Activated CD4-positive, alpha-beta memory T cell treated with anti-CD3 and anti-CD28 coated beads for 36 hours (primary cell): ENCODE measurements at regions of chr7 and their contacts with region 1.

Region 1: DNA sequence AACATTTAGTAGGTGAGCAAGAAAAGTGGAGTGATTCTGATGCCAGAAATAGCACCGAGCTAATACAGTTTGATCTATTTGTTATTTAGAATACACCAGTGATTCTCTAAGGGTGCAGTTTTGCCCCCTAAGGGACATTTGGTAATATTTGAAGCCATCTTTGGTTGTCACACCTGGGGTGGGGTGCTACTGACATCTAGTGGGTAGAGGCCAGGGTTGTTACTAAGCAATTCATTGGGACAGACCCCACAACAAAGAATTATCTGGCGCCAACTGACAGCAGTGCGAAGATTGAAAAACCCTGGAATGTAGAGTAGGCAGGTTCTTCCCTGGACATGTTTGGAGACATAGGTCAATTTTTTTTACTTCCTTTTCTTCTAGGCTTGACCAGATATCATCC is 14.6 kb downstream of the PALS2 start:
- DNase-seq: peak; percentile 48
- H3K4me3 Mint-ChIP-seq: no peak overlapping the region
- H3K27ac Mint-ChIP-seq: no peak overlapping the region
- H3K4me1 Mint-ChIP-seq: peaks cover 11% of the 10 kb centered on the region
- H3K27me3 Mint-ChIP-seq: no peaks in the 10 kb centered on the region

Region 2: GRCh38 chr7:24401628-24402593 is 185.9 kb before region 1 on chr7:
- CTCF ChIA-PET with region 1: no interaction called
- POLR2A ChIA-PET with region 1: no interaction called
- intact Hi-C with region 1: loop called (anchors 5 kb)
- DNase-seq: no peak
- H3K4me3 Mint-ChIP-seq: no peak overlapping the region
- H3K27ac Mint-ChIP-seq: no peak overlapping the region
- H3K4me1 Mint-ChIP-seq: peaks cover 8% of the 10 kb centered on the region
- H3K27me3 Mint-ChIP-seq: no peaks in the 10 kb centered on the region

Region 3: GRCh38 chr7:24617957-24618616 is 30.2 kb after region 1 on chr7:
- CTCF ChIA-PET with region 1: no interaction called
- POLR2A ChIA-PET with region 1: no interaction called
- intact Hi-C with region 1: no loop called
- DNase-seq: no peak
- H3K4me3 Mint-ChIP-seq: no peak overlapping the region
- H3K27ac Mint-ChIP-seq: no peak overlapping the region
- H3K4me1 Mint-ChIP-seq: peaks cover 7% of the 10 kb centered on the region
- H3K27me3 Mint-ChIP-seq: no peaks in the 10 kb centered on the region